AG04449 (cell line): ENCODE measurements at regions of chr1 and their contacts with region 1.

Region 1: DNA sequence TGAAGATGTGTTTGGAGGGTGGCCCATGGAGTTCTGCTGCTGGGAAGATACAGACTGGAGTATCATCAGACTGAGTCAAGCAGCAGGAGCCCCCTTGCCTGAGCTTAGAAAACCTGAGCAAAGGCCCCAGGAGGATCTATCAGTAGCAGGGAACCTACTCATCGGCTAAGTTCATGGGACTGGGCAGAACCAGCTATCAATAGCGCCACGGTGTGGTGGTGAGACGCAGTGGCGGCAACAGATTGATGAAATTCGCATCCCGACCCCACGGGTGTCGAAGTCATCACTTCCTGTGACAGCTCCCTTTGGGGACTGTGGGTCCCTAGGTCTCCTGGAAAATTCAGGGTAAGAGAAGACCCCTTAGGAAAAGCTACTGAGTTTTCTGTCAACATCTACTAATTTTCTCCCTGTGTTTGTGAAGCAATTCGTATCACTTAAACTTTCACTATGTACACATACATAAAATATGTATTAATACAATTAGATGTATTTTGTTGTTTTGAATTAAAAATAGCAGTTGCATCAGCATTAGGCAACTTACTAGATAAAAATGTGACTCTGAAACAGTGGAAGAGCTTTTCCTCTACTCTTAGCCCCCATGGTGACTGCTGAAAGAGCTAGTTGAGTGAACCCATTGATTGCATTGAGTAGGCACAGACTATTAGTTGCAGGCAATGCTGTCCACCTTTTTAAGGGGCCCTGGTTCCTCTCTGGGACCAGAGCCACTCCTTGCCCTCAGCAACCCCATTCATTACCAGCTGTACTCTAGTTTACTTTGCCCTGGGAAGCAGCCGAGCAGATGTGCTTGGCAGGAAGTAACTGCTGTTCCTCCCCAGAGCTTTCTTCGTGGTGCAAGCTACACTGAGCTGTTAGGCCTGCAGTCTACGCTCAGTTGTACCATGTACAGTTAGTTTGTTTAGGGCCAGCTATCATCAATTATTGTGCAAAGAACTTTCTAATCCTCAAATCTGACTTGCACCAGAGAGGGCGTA is 7.3 kb upstream of the CACNA1S start:
- DNase-seq: no peak
- H3K4me3 ChIP-seq: no peak overlapping the region
- CTCF ChIP-seq: peak; percentile 55

Region 2: GRCh38 chr1:201108614-201109013 is 10.9 kb before region 1 on chr1:
- CTCF ChIA-PET with region 1: interaction called, 50 read pairs
- POLR2A ChIA-PET with region 1: no interaction called
- DNase-seq: no peak
- H3K4me3 ChIP-seq: no peak overlapping the region
- CTCF ChIP-seq: no peak

Region 3: DNA sequence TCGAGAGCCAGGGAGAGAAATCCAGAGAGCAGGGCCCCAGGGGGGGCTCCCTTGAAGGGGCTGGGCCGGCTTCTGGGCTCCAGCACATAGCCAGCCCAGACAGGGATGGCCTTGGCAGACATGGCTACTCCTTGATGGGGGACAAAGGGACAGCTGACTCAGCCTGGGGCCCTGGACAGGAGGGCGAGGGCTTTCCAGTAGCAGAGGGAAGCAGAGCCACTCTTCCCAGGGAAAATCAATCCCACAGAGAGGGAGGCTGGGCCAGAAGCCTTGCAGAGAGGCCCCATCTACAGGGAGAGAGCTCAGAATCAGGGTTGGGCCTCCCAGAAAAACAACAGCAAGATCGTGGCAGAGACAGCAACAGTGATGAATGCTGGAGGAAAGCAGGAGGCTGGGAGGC is 86.7 kb after region 1 on chr1:
- CTCF ChIA-PET with region 1: no interaction called
- POLR2A ChIA-PET with region 1: no interaction called
- DNase-seq: no peak
- H3K4me3 ChIP-seq: no peak overlapping the region
- CTCF ChIP-seq: no peak

Region 4: GRCh38 chr1:201385299-201385891 is 265.9 kb after region 1 on chr1:
- CTCF ChIA-PET with region 1: no interaction called
- POLR2A ChIA-PET with region 1: no interaction called
- DNase-seq: no peak
- H3K4me3 ChIP-seq: no peak overlapping the region
- CTCF ChIP-seq: peak; percentile 86